Activated CD4-positive, alpha-beta T cell treated with anti-CD3 and anti-CD28 coated beads for 36 hours (primary cell): ENCODE measurements at regions of chr13 and their contacts with region 1.

Region 1: DNA sequence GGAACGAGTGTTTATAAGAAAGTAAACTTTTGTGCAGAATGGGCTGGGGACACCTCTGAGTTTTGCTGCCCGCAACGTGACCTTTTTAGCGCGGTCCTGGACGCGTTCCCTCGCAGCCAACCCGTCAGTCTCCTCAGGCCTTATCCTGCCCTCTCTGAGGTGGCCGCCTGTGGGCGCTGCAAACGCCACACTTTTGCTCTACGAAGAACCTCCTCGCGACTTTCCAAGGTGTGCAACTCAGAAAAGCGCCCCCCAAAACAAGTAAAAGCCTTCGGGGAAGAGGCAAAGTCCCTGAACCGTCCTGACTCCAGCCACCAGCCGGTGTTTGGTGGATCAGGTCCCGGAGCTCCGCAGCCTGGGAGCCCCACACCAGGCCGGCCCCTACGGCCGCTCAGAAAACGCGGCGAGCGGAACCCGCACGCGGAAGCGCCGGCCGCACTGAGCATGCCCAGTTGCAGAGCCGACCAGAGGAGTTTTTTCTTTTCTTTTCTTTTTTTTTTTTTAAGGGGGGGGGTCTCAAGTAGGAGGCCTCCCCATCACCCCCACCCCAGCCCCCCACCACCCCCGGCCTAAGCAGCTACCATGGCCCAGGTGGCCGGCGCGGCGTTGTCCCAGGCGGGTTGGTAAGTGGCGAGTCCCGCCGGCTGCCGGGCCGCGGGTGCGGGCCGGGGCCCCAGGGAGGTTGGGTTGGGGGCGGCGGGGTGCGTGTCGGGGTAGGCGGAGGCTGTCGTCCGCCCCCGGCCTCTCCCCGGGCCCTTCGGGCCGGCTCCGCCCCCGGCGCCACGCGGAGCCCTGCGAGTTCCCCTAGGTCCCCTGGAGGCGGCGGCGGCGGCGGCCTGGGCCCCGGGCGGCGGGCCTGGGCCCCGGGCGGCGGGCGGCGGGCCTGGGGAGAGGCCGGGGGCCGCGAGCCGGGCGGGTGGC is at the start of gene TDRD3:
- DNase-seq: peak; percentile 90
- ATAC-seq: peak; percentile 78
- H3K4me3 Mint-ChIP-seq: peak within 1 kb of the TSS; percentile 93
- H3K27ac Mint-ChIP-seq: peak within 1 kb of the TSS; percentile 97
- H3K4me1 Mint-ChIP-seq: peaks cover 25% of the 10 kb centered on the region
- H3K27me3 Mint-ChIP-seq: no peaks in the 10 kb centered on the region
- total RNA-seq, gene TDRD3: 15.8 to 16.4 TPM

Region 2: GRCh38 chr13:60118696-60119400 is 278.2 kb before region 1 on chr13:
- CTCF ChIA-PET with region 1: no interaction called
- POLR2A ChIA-PET with region 1: no interaction called
- intact Hi-C with region 1: no loop called
- DNase-seq: no peak
- ATAC-seq: no peak
- H3K4me3 Mint-ChIP-seq: no peak overlapping the region
- H3K27ac Mint-ChIP-seq: no peak overlapping the region
- H3K4me1 Mint-ChIP-seq: peaks cover 5% of the 10 kb centered on the region
- H3K27me3 Mint-ChIP-seq: no peaks in the 10 kb centered on the region

Region 3: DNA sequence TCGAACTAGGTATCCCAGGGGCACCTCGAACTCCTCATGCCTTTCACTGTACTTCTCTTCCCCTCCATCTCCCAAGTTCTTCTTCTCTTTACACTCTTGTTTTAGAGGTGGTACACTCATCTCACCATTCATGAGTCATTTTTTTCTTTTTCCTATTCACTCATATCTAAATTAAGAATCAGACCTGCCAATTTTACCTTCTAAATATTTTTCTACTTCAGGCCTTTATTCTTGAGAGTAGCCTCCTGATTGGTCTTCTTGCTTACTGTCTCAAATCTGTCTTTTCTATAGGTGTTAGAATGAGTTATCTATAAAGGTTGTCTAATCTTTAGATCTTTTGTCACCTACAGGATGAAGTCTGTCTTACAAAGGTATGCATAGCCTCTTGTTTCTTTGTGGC is 20.7 kb after region 1 on chr13:
- CTCF ChIA-PET with region 1: interaction called, 3 read pairs
- POLR2A ChIA-PET with region 1: no interaction called
- intact Hi-C with region 1: loop called (anchors 1 to 2 kb)
- DNase-seq: no peak
- ATAC-seq: peak; percentile 89
- H3K4me3 Mint-ChIP-seq: no peak overlapping the region
- H3K27ac Mint-ChIP-seq: peak overlapping the region; percentile 28
- H3K4me1 Mint-ChIP-seq: peaks cover 20% of the 10 kb centered on the region
- H3K27me3 Mint-ChIP-seq: no peaks in the 10 kb centered on the region

Region 4: GRCh38 chr13:60463787-60464186 is 66.7 kb after region 1 on chr13:
- CTCF ChIA-PET with region 1: no interaction called
- POLR2A ChIA-PET with region 1: no interaction called
- intact Hi-C with region 1: no loop called
- DNase-seq: no peak
- ATAC-seq: no peak
- H3K4me3 Mint-ChIP-seq: no peak overlapping the region
- H3K27ac Mint-ChIP-seq: no peak overlapping the region
- H3K4me1 Mint-ChIP-seq: no peaks in the 10 kb centered on the region
- H3K27me3 Mint-ChIP-seq: no peaks in the 10 kb centered on the region